Heart left ventricle (tissue), 16 donors: ENCODE measurements at regions of chr4 and their contacts with region 1.

Region 1: GRCh38 chr4:2241410-2242353 is at the starts of genes HAUS3 and POLN:
- DNase-seq: peak; percentile 98 to 100 (median 99)
- ATAC-seq: peak; percentile 94 to 99 (median 98)
- H3K4me3 ChIP-seq: peak within 1 kb of the TSS; percentile 89 to 99 (median 94)
- H3K27ac ChIP-seq: peak within 1 kb of the TSS in 11 of 12 donors; percentile 60 to 87 (median 82)
- H3K4me1 ChIP-seq: peaks cover 4 to 82% (median 60%) of the 10 kb centered on the region in 12 donors
- H3K27me3 ChIP-seq: no peaks in the 10 kb centered on the region
- CTCF ChIP-seq: no peak
- POLR2A ChIP-seq: peak; percentile 45 to 89
- total RNA-seq, gene HAUS3: 4.2 to 8.3 (median 6.3) TPM
- total RNA-seq, gene POLN: 0.38 to 4.5 (median 2.6) TPM

Region 2: DNA sequence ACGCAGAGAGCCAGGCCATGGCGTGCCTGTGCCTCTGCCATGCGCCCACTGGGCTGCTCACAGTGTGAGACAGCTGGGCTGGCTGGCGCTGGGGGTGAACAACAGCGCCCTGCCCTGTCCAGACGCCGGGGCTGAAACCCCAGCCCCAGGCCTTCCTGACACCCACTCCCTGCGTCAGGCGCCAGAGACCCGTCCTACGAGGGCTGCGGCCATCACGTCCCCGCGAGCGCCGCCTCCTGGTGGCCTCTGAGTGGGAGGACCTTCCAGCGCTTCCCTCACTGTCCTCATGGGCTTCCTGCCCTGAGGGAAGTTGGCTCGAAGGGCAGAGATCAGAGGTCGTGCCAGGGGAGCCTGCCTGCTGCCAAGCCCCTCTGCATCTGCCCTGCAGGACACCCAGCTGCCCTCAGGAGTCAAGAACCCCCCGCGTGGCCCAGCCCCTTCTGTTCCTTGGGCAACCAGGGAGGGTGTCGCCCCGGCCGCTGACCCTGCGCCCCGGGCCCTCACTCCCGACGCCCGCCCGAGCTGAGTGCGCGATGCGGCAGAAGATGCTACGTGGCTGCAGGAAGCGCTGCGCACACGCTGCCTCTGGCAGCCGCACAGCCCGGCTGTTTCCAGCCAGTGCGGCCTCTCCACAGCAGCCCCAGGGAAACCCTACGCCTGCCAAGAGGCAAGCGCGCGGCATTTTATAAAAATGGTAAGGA is 249.1 kb before region 1 on chr4:
- intact Hi-C with region 1: no loop called
- DNase-seq: no peak
- ATAC-seq: peak in 3 of 4 donors; percentile 20 to 41 (median 34)
- H3K4me3 ChIP-seq: peak overlapping the region in 2 of 12 donors; percentile 10 to 24
- H3K27ac ChIP-seq: no peak overlapping the region
- H3K4me1 ChIP-seq: no peaks in the 10 kb centered on the region
- H3K27me3 ChIP-seq: no peaks in the 10 kb centered on the region
- CTCF ChIP-seq: no peak
- POLR2A ChIP-seq: no peak

Region 3: GRCh38 chr4:2116687-2117400 is 124.8 kb before region 1 on chr4:
- intact Hi-C with region 1: no loop called
- DNase-seq: no peak
- ATAC-seq: no peak
- H3K4me3 ChIP-seq: no peak overlapping the region
- H3K27ac ChIP-seq: no peak overlapping the region
- H3K4me1 ChIP-seq: no peaks in the 10 kb centered on the region
- H3K27me3 ChIP-seq: no peaks in the 10 kb centered on the region
- CTCF ChIP-seq: no peak
- POLR2A ChIP-seq: no peak

Region 4: GRCh38 chr4:2255501-2256155 is 13.9 kb after region 1 on chr4:
- intact Hi-C with region 1: loop called in 2 of 10 experiments (anchors 2 kb)
- DNase-seq: peak; percentile 39 to 68 (median 45)
- ATAC-seq: peak in 3 of 4 donors; percentile 3 to 34 (median 18)
- H3K4me3 ChIP-seq: peak overlapping the region in 7 of 12 donors; percentile 8 to 32 (median 21)
- H3K27ac ChIP-seq: peak overlapping the region; percentile 74 to 94 (median 89)
- H3K4me1 ChIP-seq: peaks cover 21 to 78% (median 68%) of the 10 kb centered on the region in 12 donors
- H3K27me3 ChIP-seq: no peaks in the 10 kb centered on the region
- CTCF ChIP-seq: peak in 2 of 12 donors; percentile 5 to 6
- POLR2A ChIP-seq: no peak

Region 5: DNA sequence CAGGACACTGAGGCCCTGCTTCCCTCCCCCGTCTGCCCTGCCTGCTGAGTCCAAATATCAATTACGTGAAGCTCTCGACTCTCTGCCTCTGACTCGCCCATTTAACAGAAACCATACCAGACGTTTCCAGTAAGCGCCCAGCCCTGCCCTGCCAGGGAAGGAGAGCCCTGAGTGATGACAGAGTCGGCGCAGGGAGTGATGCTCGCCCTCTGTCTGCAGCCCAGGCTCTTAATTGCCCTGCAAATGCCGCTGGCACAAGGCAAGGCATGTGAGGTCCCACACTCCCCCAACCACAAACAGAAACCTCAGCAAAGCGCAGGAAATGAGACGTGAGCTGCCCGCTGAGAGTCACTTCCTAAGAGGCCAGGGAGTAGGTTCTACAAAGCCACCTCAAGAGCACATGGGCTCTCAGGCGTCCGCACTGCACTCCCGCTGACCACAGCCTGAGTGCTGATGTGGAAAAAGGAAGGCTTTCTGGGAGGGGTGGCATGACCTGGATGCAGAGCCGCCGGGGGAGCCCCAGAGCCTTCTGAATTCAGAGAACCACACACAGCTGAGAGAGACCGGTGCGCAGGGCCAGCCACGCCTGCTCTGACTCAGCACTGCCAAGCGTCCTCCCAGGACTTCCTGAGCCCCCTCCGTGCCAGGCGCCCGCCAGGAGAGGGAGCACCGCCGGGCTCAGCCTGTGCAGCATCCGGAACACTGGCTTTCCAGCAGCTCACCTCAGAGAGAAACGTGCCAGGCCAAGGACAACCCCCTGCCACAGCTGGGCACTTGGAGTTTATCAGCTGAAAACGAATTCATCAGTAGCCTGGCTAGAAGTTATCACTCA is 171.4 kb after region 1 on chr4:
- intact Hi-C with region 1: loop called in 5 of 10 experiments (anchors 2 to 5 kb)
- DNase-seq: peak; percentile 75 to 88 (median 83)
- ATAC-seq: peak; percentile 91 to 95 (median 92)
- H3K4me3 ChIP-seq: peak overlapping the region in 9 of 12 donors; percentile 18 to 45 (median 27)
- H3K27ac ChIP-seq: peak overlapping the region in 11 of 12 donors; percentile 30 to 92 (median 59)
- H3K4me1 ChIP-seq: peaks cover 0 to 61% (median 32%) of the 10 kb centered on the region in 12 donors
- H3K27me3 ChIP-seq: peaks cover 0 to 20% (median 0%) of the 10 kb centered on the region in 9 donors
- CTCF ChIP-seq: peak in 11 of 12 donors; percentile 23 to 58 (median 34)
- POLR2A ChIP-seq: peak in 1 of 2 donors; percentile 31

Region 6: GRCh38 chr4:2424581-2424980 is 182.9 kb after region 1 on chr4:
- intact Hi-C with region 1: loop called in 4 of 10 experiments (anchors 5 kb)
- DNase-seq: peak in 1 of 5 donors; percentile 35
- ATAC-seq: no peak
- H3K4me3 ChIP-seq: no peak overlapping the region
- H3K27ac ChIP-seq: no peak overlapping the region
- H3K4me1 ChIP-seq: peaks cover 0 to 4% (median under 1%) of the 10 kb centered on the region in 12 donors
- H3K27me3 ChIP-seq: peaks cover 0 to 19% (median 16%) of the 10 kb centered on the region in 9 donors
- CTCF ChIP-seq: no peak
- POLR2A ChIP-seq: no peak

Region 7: GRCh38 chr4:2536193-2537010 is 294.7 kb after region 1 on chr4 and contains the start of gene FAM193A:
- intact Hi-C with region 1: loop called in 2 of 10 experiments (anchors 5 to 10 kb)
- DNase-seq: peak; percentile 99 to 100 (median 100)
- ATAC-seq: peak; percentile 96 to 100 (median 98)
- H3K4me3 ChIP-seq: peak within 1 kb of the TSS; percentile 71 to 99 (median 92)
- H3K27ac ChIP-seq: peak within 1 kb of the TSS; percentile 94 to 99 (median 97)
- H3K4me1 ChIP-seq: peaks cover 5 to 38% (median 26%) of the 10 kb centered on the region in 12 donors
- H3K27me3 ChIP-seq: no peaks in the 10 kb centered on the region
- CTCF ChIP-seq: peak in 3 of 12 donors; percentile 5 to 15 (median 11)
- POLR2A ChIP-seq: peak in 1 of 2 donors; percentile 73
- total RNA-seq, gene FAM193A: 12.6 to 21.0 (median 17.3) TPM

Region 8: GRCh38 chr4:2755837-2756694 is 514.4 kb after region 1 on chr4 and contains the start of gene TNIP2:
- intact Hi-C with region 1: loop called in 1 of 10 experiments (anchors 5 kb)
- DNase-seq: peak; percentile 90 to 95 (median 92)
- ATAC-seq: peak; percentile 69 to 94 (median 86)
- H3K4me3 ChIP-seq: peak within 1 kb of the TSS; percentile 62 to 99 (median 89)
- H3K27ac ChIP-seq: peak within 1 kb of the TSS; percentile 48 to 95 (median 88)
- H3K4me1 ChIP-seq: peaks cover 0 to 30% (median 13%) of the 10 kb centered on the region in 12 donors
- H3K27me3 ChIP-seq: no peaks in the 10 kb centered on the region
- CTCF ChIP-seq: peak in 10 of 12 donors; percentile 17 to 52 (median 38)
- POLR2A ChIP-seq: peak in 1 of 2 donors; percentile 80
- total RNA-seq, gene TNIP2: 12.6 to 94.5 (median 23.4) TPM